Activated CD4-positive, alpha-beta T cell treated with anti-CD3 and anti-CD28 coated beads, Interleukin-2, amount 10 ng/mL, durations not matched to agents 24 days and 14 days (primary cell): ENCODE measurements at regions of chr7 and their contacts with region 1.

Region 1: GRCh38 chr7:114799628-114800028 is 122.3 kb upstream of the MDFIC start:
- DNase-seq: no peak
- H3K4me3 Mint-ChIP-seq: peak overlapping the region; percentile 13
- H3K27ac Mint-ChIP-seq: peak overlapping the region; percentile 96
- H3K4me1 Mint-ChIP-seq: peaks cover 43% of the 10 kb centered on the region
- H3K27me3 Mint-ChIP-seq: no peaks in the 10 kb centered on the region

Region 2: GRCh38 chr7:114777288-114777687 is 22.3 kb before region 1 on chr7:
- intact Hi-C with region 1: loop called (anchors 1 kb)
- DNase-seq: peak; percentile 3
- H3K4me3 Mint-ChIP-seq: no peak overlapping the region
- H3K27ac Mint-ChIP-seq: no peak overlapping the region
- H3K4me1 Mint-ChIP-seq: peaks cover 10% of the 10 kb centered on the region
- H3K27me3 Mint-ChIP-seq: peaks cover 2% of the 10 kb centered on the region

Region 3: GRCh38 chr7:114818501-114818900 is 18.9 kb after region 1 on chr7:
- intact Hi-C with region 1: loop called (anchors 1 kb)
- DNase-seq: no peak
- H3K4me3 Mint-ChIP-seq: no peak overlapping the region
- H3K27ac Mint-ChIP-seq: peak overlapping the region; percentile 30
- H3K4me1 Mint-ChIP-seq: peaks cover 29% of the 10 kb centered on the region
- H3K27me3 Mint-ChIP-seq: no peaks in the 10 kb centered on the region

Region 4: GRCh38 chr7:114825423-114825951 is 25.9 kb after region 1 on chr7:
- intact Hi-C with region 1: loop called (anchors 1 kb)
- DNase-seq: peak; percentile 72
- H3K4me3 Mint-ChIP-seq: peak overlapping the region; percentile 54
- H3K27ac Mint-ChIP-seq: peak overlapping the region; percentile 97
- H3K4me1 Mint-ChIP-seq: peaks cover 24% of the 10 kb centered on the region
- H3K27me3 Mint-ChIP-seq: no peaks in the 10 kb centered on the region